ENCODE measurements at regions of chr5 and their contacts with region 1.

Region 1: DNA sequence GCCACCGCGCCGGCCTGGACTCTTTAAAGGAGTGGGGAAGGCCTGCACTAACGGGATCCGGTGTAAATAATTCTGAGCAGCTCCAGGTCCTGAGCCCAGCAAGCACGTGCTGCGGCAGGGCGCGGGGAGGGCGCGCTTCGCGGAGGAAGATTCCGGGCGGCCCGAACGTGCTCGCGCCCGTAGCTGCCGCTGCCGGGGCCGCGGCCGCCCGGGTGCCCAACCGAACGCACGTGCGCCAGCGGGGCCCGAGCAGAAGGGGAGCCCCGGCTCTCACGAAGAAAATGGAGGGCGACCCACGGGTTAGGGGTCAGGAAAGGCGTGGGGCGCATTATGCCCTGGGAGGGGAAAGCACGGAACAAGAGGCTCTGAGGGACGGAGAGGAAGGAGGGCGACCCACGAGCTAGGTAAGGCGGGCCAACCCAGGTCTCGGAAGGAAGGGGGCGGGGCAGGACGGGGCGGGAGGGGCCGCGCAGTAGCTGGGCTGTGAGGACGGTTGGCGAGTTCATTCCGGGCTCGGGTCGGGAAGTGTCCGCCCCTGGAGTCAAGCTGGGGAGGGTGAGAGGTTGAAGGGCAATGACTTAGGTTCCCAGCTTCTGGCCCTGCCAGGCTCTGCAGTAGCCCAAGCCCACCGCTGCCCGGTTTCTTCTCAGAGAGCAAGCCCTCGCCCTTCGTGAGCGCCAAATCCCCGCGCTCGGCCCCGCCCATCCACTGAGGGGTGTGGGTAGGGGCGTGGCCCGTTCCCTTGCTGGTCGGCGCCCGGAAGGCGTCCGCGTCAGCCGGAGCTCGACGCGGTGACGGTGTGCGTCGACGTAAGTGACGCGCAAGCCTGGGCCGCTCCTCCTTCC is at the start of gene ZNF131:
- DNase-seq: peak; percentile 95 to 100 (median 98)
- H3K4me3 ChIP-seq: peak within 1 kb of the TSS; percentile 85 to 87
- H3K4me3 Mint-ChIP-seq: peak within 1 kb of the TSS; percentile 91 to 96 (median 94)
- H3K27ac ChIP-seq: peak within 1 kb of the TSS; percentile 97
- H3K27ac Mint-ChIP-seq: peak within 1 kb of the TSS; percentile 87 to 99 (median 98)
- H3K4me1 ChIP-seq: peaks cover 45% of the 10 kb centered on the region
- H3K4me1 Mint-ChIP-seq: peaks cover 21 to 46% (median 37%) of the 10 kb centered on the region in 4 donors
- H3K27me3 ChIP-seq: no peaks in the 10 kb centered on the region
- H3K27me3 Mint-ChIP-seq: no peaks in the 10 kb centered on the region
- total RNA-seq, gene ZNF131: 76.5 to 86.9 TPM

Region 2: GRCh38 chr5:42950440-42951292 is 170.3 kb before region 1 on chr5:
- CTCF ChIA-PET with region 1: interaction called, 9 read pairs
- POLR2A ChIA-PET with region 1: interaction called, 54 read pairs
- intact Hi-C with region 1: loop called (anchors 1 kb)
- DNase-seq: peak; percentile 61 to 90 (median 66)
- H3K4me3 ChIP-seq: peak overlapping the region; percentile 83 to 90
- H3K4me3 Mint-ChIP-seq: peak overlapping the region; percentile 93 to 99 (median 98)
- H3K27ac ChIP-seq: peak overlapping the region; percentile 96
- H3K27ac Mint-ChIP-seq: peak overlapping the region; percentile 99 to 100 (median 100)
- H3K4me1 ChIP-seq: peaks cover 22% of the 10 kb centered on the region
- H3K4me1 Mint-ChIP-seq: peaks cover 7 to 42% (median 30%) of the 10 kb centered on the region in 4 donors
- H3K27me3 ChIP-seq: no peaks in the 10 kb centered on the region
- H3K27me3 Mint-ChIP-seq: no peaks in the 10 kb centered on the region

Region 3: DNA sequence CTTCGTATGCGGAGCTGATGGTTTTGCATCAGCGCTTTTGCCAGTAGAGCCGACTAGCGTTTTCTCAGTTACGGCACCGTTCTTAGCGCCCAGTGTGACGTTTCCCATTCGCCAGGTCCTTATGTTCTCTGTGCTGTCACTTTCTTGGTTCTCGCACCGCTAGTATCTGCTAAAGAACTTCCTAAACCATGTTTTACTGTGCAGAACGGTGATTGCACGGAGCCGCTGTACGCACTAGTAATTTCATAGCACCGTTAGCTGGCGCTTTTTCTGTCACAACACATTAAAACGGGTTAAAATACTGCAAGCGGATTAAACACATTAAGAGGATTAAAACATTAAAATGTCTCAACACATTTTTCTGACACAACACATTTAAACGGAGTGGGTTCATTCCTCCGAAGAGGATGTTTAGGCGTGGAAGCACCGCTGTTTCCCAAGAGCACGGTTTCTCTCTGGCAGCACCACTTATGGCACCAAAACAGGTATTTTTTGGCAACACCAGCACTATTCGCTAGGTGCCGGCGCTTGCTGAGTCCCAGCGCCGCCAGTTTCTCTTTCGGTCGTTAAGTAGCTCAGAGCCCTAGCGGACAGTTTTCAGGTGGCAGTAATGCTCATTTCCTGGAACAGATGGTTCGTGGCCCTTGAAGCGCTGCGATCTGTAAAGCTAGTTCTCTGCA is 101.2 kb before region 1 on chr5:
- CTCF ChIA-PET with region 1: interaction called, 8 read pairs
- POLR2A ChIA-PET with region 1: interaction called, 106 read pairs
- intact Hi-C with region 1: no loop called
- DNase-seq: peak; percentile 84 to 94 (median 91)
- H3K4me3 ChIP-seq: peak overlapping the region; percentile 73 to 83
- H3K4me3 Mint-ChIP-seq: peak overlapping the region; percentile 94 to 99 (median 98)
- H3K27ac ChIP-seq: peak overlapping the region; percentile 94
- H3K27ac Mint-ChIP-seq: peak overlapping the region; percentile 99 to 100 (median 100)
- H3K4me1 ChIP-seq: peaks cover 40% of the 10 kb centered on the region
- H3K4me1 Mint-ChIP-seq: peaks cover 24 to 67% (median 34%) of the 10 kb centered on the region in 4 donors
- H3K27me3 ChIP-seq: no peaks in the 10 kb centered on the region
- H3K27me3 Mint-ChIP-seq: no peaks in the 10 kb centered on the region

Region 4: DNA sequence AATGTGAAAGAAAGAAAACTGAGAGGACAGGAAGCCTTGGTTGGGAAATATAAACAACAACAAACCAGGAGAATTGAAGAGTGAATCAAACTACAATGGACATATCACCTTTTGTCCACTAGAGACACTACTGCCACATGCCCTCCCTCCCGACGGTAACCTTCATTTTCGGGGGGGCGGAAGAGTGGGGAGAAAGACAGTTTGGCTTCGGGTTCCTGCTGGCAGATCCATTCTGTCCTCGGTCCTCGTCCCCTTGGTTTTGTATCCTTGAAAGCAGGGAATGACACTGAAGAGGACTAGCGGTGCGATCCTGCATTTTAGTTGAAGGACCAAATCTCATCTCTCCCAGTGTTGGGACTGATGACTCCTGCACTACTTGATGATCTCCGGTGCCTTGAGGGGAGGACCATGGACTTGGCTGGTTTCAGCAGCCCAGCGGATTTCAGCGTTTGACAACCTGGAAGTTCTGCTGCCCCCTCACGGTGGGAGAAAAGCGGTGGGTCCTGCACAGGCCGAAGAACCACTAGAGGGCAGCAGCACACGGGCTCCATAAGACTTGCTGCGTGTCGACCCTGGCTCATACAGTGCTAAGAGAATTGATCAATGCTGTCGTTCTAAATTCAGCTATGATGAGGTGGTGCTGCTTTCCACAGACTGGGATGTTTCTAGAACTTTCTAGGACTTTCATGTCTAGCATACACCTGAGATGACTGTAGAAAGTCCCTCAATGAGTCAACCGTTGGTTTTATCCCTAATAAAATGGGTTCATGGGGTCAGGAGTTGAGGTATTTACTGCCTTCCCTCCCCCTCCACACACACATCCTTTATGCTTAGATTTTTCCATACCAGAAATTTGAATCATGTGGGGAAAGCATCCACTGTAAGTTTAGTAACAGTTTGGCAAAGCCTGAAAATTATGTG is 15.3 kb before region 1 on chr5:
- CTCF ChIA-PET with region 1: interaction called, 168 read pairs
- POLR2A ChIA-PET with region 1: interaction called, 189 read pairs
- intact Hi-C with region 1: loop called (anchors 1 kb)
- DNase-seq: peak; percentile 87 to 90 (median 88)
- H3K4me3 ChIP-seq: peak overlapping the region; percentile 62 to 87
- H3K4me3 Mint-ChIP-seq: peak overlapping the region; percentile 85 to 94 (median 88)
- H3K27ac ChIP-seq: peak overlapping the region; percentile 44
- H3K27ac Mint-ChIP-seq: peak overlapping the region; percentile 84 to 94 (median 92)
- H3K4me1 ChIP-seq: peaks cover 43% of the 10 kb centered on the region
- H3K4me1 Mint-ChIP-seq: peaks cover 28 to 45% (median 37%) of the 10 kb centered on the region in 4 donors
- H3K27me3 ChIP-seq: no peaks in the 10 kb centered on the region
- H3K27me3 Mint-ChIP-seq: no peaks in the 10 kb centered on the region

Region 5: DNA sequence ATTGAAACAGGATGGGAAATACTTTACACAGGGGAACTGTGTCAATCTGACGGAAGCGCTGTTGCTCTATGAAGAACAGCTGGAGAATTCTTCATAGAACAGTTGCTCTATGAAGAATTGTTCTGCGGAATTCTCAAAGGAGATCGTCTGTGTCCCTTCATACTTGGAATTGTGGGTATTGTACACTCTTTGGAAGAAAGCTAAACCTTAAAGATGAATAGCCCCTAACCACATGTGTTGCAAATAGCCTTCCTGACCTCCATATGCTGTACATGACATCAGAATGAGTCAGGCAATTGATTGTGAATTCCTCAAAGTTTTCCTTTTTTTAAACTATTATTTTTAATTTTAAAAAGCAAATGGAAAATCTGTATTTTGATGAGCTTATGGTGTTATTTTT is 86.7 kb after region 1 on chr5:
- CTCF ChIA-PET with region 1: no interaction called
- POLR2A ChIA-PET with region 1: no interaction called
- intact Hi-C with region 1: no loop called
- DNase-seq: no peak
- H3K4me3 ChIP-seq: no peak overlapping the region
- H3K4me3 Mint-ChIP-seq: no peak overlapping the region
- H3K27ac ChIP-seq: no peak overlapping the region
- H3K27ac Mint-ChIP-seq: no peak overlapping the region
- H3K4me1 ChIP-seq: no peaks in the 10 kb centered on the region
- H3K4me1 Mint-ChIP-seq: no peaks in the 10 kb centered on the region
- H3K27me3 ChIP-seq: no peaks in the 10 kb centered on the region
- H3K27me3 Mint-ChIP-seq: peaks cover 16 to 29% of the 10 kb centered on the region in 2 donors

Region 6: DNA sequence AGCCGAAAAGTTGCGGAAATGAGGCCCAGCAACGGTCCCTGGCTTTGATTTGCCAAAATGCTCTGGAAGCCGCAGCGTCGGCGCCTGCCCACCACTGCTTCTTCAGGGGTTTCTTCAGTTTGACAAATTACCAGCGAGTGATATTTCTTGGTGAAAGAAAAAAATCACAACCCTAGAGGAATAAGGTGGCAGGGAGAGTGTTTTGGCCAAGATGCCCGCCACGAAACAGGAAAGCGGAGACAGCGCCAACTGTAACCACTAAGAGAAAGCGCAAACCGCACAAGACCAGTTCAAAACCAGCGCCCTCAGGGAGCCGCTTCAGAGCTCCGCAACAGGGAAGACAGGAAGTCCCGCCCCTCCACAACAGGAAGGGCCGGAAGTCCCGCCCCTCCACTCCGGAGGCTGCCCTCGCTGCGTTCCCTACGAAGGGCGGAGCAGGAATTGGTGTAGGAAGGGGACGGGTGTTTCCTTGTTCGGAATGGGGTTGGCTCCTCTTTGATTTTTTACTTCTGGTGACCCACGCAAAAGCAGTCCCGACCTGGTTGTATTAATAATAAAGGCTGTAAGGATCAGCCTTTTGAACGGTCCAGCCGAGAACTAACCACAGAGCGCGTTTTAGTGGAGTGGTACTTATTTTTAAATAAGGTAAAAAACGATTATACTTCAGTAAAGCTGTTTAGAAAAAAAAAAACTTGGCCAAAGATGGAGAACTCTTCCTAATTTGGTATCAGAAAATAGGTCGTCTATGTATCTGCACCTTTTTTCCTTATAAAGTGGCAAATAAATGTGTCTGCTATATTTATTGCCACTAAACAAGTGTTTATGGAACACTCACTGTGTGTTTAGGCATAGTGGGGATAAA is 394.1 kb after region 1 on chr5 and contains the start of gene C5orf34:
- CTCF ChIA-PET with region 1: no interaction called
- POLR2A ChIA-PET with region 1: interaction called, 3 read pairs
- intact Hi-C with region 1: loop called (anchors 1 kb)
- DNase-seq: peak; percentile 90 to 93 (median 91)
- H3K4me3 ChIP-seq: peak within 1 kb of the TSS; percentile 54 to 92
- H3K4me3 Mint-ChIP-seq: peak within 1 kb of the TSS; percentile 90 to 97 (median 94)
- H3K27ac ChIP-seq: peak within 1 kb of the TSS; percentile 76
- H3K27ac Mint-ChIP-seq: peak within 1 kb of the TSS; percentile 90 to 98 (median 95)
- H3K4me1 ChIP-seq: peaks cover 25% of the 10 kb centered on the region
- H3K4me1 Mint-ChIP-seq: peaks cover 22 to 35% (median 27%) of the 10 kb centered on the region in 4 donors
- H3K27me3 ChIP-seq: no peaks in the 10 kb centered on the region
- H3K27me3 Mint-ChIP-seq: no peaks in the 10 kb centered on the region
- total RNA-seq, gene C5orf34: 2.5 to 2.9 TPM